HCT116 (cell line): ENCODE measurements at regions of chr10 and their contacts with region 1.

Region 1: DNA sequence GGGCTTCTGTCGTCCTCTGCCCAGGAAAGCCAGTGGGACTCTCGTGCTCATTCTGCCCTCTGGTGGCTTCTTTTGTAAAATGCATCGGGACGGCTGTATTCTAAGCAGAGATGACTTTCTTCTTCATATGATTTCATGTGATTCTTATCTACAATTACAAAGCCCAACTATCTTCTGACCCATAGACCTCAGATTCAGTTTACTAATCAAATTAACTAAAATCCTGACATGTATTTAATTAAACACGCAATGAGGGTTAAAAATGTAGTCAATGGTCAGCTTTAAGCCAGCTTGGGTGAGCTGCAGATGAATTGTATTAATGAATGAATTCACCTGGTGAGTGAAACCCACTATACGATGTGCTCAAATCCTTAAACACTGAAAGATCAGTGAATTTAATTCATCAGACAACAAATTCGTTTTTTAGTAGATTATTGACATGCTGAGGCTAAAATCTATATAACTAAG is 117.6 kb upstream of the FAM204A start:
- DNase-seq: peak; percentile 73
- ATAC-seq: peak; percentile 99
- H3K4me3 ChIP-seq: no peak overlapping the region
- H3K27ac ChIP-seq: no peak overlapping the region
- H3K4me1 ChIP-seq: peaks cover 0 to 6% of the 10 kb centered on the region in 2 experiments; a peak in 1 of 4 replicates
- H3K27me3 ChIP-seq: peaks cover 33% of the 10 kb centered on the region
- CTCF ChIP-seq: peak; percentile 86 to 93 (median 90)
- POLR2A ChIP-seq: no peak
- RAD21 ChIP-seq: peak; percentile 93

Region 2: GRCh38 chr10:117216611-117217195 is 1243.1 kb before region 1 on chr10:
- CTCF ChIA-PET with region 1: interaction called, 10 read pairs
- POLR2A ChIA-PET with region 1: no interaction called
- RAD21 ChIA-PET with region 1: no interaction called
- intact Hi-C with region 1: no loop called
- DNase-seq: peak; percentile 54
- ATAC-seq: peak; percentile 84
- H3K4me3 ChIP-seq: peak overlapping the region; percentile 19 to 27
- H3K27ac ChIP-seq: peak overlapping the region; percentile 6; the same call in 1 of the 2 replicates
- H3K4me1 ChIP-seq: peaks cover 2 to 21% of the 10 kb centered on the region in 2 experiments; a peak in 2 of 4 replicates
- H3K27me3 ChIP-seq: peaks cover 6% of the 10 kb centered on the region; the same call in 1 of the 2 replicates
- CTCF ChIP-seq: peak; percentile 100
- POLR2A ChIP-seq: no peak
- RAD21 ChIP-seq: peak; percentile 99

Region 3: DNA sequence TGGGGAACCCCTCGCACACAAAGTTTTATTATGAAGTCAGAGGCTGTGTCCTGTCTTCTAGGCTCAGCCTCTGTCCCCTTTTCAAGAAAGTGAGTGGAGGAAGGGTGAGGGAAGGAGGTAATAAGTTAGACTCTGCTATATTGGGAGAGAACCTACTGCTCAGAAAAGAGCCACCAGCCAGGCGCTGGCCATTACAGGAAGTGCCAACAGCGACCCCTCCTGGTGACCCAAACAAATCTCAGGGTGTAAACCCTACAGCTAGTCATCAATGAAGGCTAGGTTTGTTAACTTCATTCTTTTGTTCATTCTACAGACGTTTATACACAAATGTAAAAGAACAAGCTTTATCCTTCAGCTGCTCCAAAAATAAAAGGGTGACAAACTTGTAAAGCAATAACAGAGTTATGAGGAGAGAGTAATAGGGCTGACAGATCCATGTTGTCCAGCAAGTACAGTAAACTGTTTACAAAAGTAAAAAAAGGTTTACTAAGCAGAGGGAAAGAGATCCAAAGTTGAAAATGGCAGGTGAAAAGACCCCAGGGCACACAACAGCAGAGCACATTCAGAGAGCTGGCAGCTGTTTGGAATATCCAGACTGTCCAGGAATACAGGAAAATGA is 200.4 kb before region 1 on chr10:
- CTCF ChIA-PET with region 1: interaction called, 10 read pairs
- POLR2A ChIA-PET with region 1: no interaction called
- RAD21 ChIA-PET with region 1: no interaction called
- intact Hi-C with region 1: no loop called
- DNase-seq: peak; percentile 32
- ATAC-seq: peak; percentile 98
- H3K4me3 ChIP-seq: no peak overlapping the region
- H3K27ac ChIP-seq: no peak overlapping the region
- H3K4me1 ChIP-seq: no peaks in the 10 kb centered on the region
- H3K27me3 ChIP-seq: peaks cover 54% of the 10 kb centered on the region
- CTCF ChIP-seq: peak; percentile 61 to 99 (median 92); a peak in 5 of 6 replicates
- POLR2A ChIP-seq: no peak
- RAD21 ChIP-seq: peak; percentile 70

Region 4: GRCh38 chr10:118473305-118473960 is 13.7 kb after region 1 on chr10:
- CTCF ChIA-PET with region 1: interaction called, 18 read pairs
- POLR2A ChIA-PET with region 1: no interaction called
- RAD21 ChIA-PET with region 1: no interaction called
- intact Hi-C with region 1: no loop called
- DNase-seq: no peak
- ATAC-seq: no peak
- H3K4me3 ChIP-seq: no peak overlapping the region
- H3K27ac ChIP-seq: no peak overlapping the region
- H3K4me1 ChIP-seq: no peaks in the 10 kb centered on the region
- H3K27me3 ChIP-seq: peaks cover 46% of the 10 kb centered on the region
- CTCF ChIP-seq: no peak
- POLR2A ChIP-seq: no peak
- RAD21 ChIP-seq: no peak

Region 5: DNA sequence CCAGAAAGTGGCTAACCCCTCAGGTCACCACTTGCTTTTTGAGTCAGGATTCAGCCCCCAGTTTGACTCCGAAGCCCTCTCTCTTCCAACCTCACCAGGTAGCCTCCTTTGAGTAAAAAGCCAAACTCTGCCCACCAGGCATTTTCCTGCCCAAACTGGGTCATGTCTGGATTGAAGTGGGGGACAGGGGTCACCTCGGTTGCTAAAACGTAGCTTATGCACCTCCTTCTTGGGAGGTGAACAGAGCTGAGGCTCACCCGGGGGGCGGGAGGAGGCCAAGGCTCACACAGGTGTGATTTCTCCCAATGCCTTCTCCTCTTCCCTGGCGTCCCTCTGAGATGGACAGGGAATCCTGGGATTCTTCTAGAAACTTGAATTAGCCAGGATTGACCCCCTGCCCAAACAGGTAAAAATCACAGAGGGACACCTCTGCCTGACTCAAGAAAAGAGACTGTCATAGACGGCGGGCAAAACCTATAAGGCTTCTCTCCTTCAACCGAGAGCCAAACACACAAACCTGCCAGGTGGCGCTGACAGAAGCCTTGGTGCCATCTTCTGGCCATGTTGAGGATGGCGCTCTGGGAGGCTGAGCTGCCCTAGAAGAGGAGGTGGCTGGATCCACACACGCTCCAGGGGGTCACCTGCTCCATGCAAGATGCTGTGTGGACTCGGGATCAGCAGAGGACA is 84.1 kb after region 1 on chr10:
- CTCF ChIA-PET with region 1: interaction called, 28 read pairs
- POLR2A ChIA-PET with region 1: interaction called, 3 read pairs
- RAD21 ChIA-PET with region 1: interaction called, 3 read pairs
- intact Hi-C with region 1: loop called (anchors 1 kb)
- DNase-seq: peak; percentile 63
- ATAC-seq: peak; percentile 99
- H3K4me3 ChIP-seq: no peak overlapping the region
- H3K27ac ChIP-seq: no peak overlapping the region
- H3K4me1 ChIP-seq: peaks cover 0 to 3% of the 10 kb centered on the region in 2 experiments; a peak in 1 of 4 replicates
- H3K27me3 ChIP-seq: peaks cover 30% of the 10 kb centered on the region; the same call in 1 of the 2 replicates
- CTCF ChIP-seq: peak; percentile 88 to 94 (median 92)
- POLR2A ChIP-seq: no peak
- RAD21 ChIP-seq: peak; percentile 92